ENCODE measurements at regions of chr3 and their contacts with region 1.

Region 1: DNA sequence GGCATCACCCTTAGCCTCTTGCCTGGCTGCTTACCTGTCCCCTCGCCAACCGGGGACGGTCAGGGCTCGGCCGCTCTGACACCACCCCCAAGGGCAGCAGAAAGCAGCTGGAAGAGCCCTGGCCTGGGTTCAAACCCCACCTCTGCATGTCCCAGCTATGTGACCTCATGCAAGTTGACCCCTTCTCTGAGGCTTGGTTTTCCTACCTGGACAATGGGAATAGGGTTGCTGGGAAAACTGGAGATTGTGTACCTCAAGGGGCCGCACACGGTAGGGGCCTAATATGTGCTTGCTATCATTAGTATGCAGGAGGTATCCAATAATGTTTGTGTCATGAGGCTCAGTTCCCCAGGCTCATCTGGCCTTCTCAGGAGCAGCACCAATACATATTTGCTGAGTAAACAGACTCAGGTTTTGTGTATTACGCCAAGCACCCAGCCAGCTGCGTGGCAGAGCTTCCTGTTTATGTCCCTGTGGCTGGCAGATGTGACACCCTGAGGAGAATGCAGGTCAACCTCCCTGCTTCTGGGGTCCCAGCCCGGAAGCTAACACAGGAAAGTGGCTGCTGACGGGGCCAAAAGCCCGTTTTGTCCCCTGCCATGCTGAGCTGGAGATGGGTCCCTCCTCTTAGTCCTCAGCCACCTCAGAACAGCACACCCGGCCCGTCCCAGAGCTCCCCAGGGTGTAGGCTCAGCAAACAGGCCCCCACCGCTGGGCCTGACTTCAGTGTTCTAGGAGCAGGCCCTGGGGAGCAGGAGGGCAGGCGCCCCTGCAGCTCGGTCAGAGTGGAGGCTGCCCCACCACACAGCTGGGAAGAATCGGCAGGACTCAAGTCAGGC is 29.7 kb downstream of the PLXND1 start:
- DNase-seq: peak; percentile 57 to 94 (median 76)
- ATAC-seq: peak; percentile 86
- H3K4me3 ChIP-seq: no peak overlapping the region
- H3K4me3 Mint-ChIP-seq: peak overlapping the region; percentile 45
- H3K27ac ChIP-seq: peak overlapping the region; percentile 12 to 89
- H3K27ac Mint-ChIP-seq: peak overlapping the region; percentile 95
- H3K4me1 ChIP-seq: peaks cover 39% of the 10 kb centered on the region
- H3K4me1 Mint-ChIP-seq: peaks cover 50% of the 10 kb centered on the region
- H3K27me3 ChIP-seq: no peaks in the 10 kb centered on the region
- H3K27me3 Mint-ChIP-seq: no peaks in the 10 kb centered on the region
- CTCF ChIP-seq: no peak

Region 2: GRCh38 chr3:129112308-129113052 is 464.3 kb before region 1 on chr3:
- CTCF ChIA-PET with region 1: no interaction called
- POLR2A ChIA-PET with region 1: no interaction called
- intact Hi-C with region 1: no loop called
- DNase-seq: peak in 1 of 9 experiments; percentile 60
- ATAC-seq: peak; percentile 47
- H3K4me3 ChIP-seq: peak overlapping the region in 1 of 2 experiments; percentile 5
- H3K4me3 Mint-ChIP-seq: peak overlapping the region; percentile 52
- H3K27ac ChIP-seq: peak overlapping the region in 1 of 2 experiments; percentile 14
- H3K27ac Mint-ChIP-seq: peak overlapping the region; percentile 82
- H3K4me1 ChIP-seq: peaks cover 81% of the 10 kb centered on the region
- H3K4me1 Mint-ChIP-seq: peaks cover 78% of the 10 kb centered on the region
- H3K27me3 ChIP-seq: no peaks in the 10 kb centered on the region
- H3K27me3 Mint-ChIP-seq: no peaks in the 10 kb centered on the region
- CTCF ChIP-seq: no peak

Region 3: GRCh38 chr3:129558772-129559564 is 17.8 kb before region 1 on chr3:
- CTCF ChIA-PET with region 1: no interaction called
- POLR2A ChIA-PET with region 1: interaction called, 10 read pairs
- intact Hi-C with region 1: no loop called
- DNase-seq: no peak
- ATAC-seq: peak; percentile 8
- H3K4me3 ChIP-seq: no peak overlapping the region
- H3K4me3 Mint-ChIP-seq: no peak overlapping the region
- H3K27ac ChIP-seq: peak overlapping the region in 1 of 2 experiments; percentile 62
- H3K27ac Mint-ChIP-seq: no peak overlapping the region
- H3K4me1 ChIP-seq: peaks cover 4% of the 10 kb centered on the region
- H3K4me1 Mint-ChIP-seq: peaks cover 21% of the 10 kb centered on the region
- H3K27me3 ChIP-seq: no peaks in the 10 kb centered on the region
- H3K27me3 Mint-ChIP-seq: no peaks in the 10 kb centered on the region
- CTCF ChIP-seq: no peak

Region 4: GRCh38 chr3:129596194-129597086 is 19.7 kb after region 1 on chr3:
- CTCF ChIA-PET with region 1: interaction called, 12 read pairs
- POLR2A ChIA-PET with region 1: interaction called, 62 read pairs
- intact Hi-C with region 1: no loop called
- DNase-seq: peak in 1 of 9 experiments; percentile 31
- ATAC-seq: no peak
- H3K4me3 ChIP-seq: no peak overlapping the region
- H3K4me3 Mint-ChIP-seq: no peak overlapping the region
- H3K27ac ChIP-seq: no peak overlapping the region
- H3K27ac Mint-ChIP-seq: no peak overlapping the region
- H3K4me1 ChIP-seq: peaks cover 32% of the 10 kb centered on the region
- H3K4me1 Mint-ChIP-seq: peaks cover 47% of the 10 kb centered on the region
- H3K27me3 ChIP-seq: no peaks in the 10 kb centered on the region
- H3K27me3 Mint-ChIP-seq: peaks cover 2% of the 10 kb centered on the region
- CTCF ChIP-seq: no peak

Measured in CD8-positive, alpha-beta T cell (primary cell).